Activated CD4-positive, alpha-beta memory T cell treated with anti-CD3 and anti-CD28 coated beads, Interleukin-2, amount 10 ng/mL, durations not matched to agents 7 days and 5 days (primary cell): ENCODE measurements at regions of chr3 and their contacts with region 1.

Region 1: GRCh38 chr3:152268555-152269425 is at the start of gene MBNL1:
- DNase-seq: peak; percentile 90
- H3K4me3 Mint-ChIP-seq: peak within 1 kb of the TSS; percentile 92
- H3K27ac Mint-ChIP-seq: peak within 1 kb of the TSS; percentile 95
- H3K4me1 Mint-ChIP-seq: peaks cover 56% of the 10 kb centered on the region
- H3K27me3 Mint-ChIP-seq: no peaks in the 10 kb centered on the region
- total RNA-seq, gene MBNL1: 289 to 305 TPM

Region 2: DNA sequence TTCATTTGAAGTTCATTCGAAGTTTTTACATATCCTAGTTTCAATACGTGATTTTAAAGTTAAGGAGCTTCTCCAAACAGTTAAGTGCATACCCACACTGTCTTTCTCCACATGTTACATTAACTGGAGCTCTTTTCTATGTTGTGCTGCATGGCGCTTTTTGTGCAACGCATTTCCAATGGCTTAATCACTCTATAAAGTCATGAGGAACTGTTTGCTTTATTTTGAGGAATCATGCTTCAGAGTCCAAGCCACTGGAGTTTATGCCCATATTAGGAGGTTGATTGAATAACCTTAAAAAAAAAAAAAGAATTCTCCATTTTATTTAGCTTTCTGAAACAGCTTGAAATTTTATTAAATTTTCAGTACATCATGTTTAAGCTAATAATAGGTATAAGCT is 109.5 kb before region 1 on chr3:
- CTCF ChIA-PET with region 1: no interaction called
- POLR2A ChIA-PET with region 1: no interaction called
- DNase-seq: no peak
- H3K4me3 Mint-ChIP-seq: no peak overlapping the region
- H3K27ac Mint-ChIP-seq: no peak overlapping the region
- H3K4me1 Mint-ChIP-seq: peaks cover 2% of the 10 kb centered on the region
- H3K27me3 Mint-ChIP-seq: peaks cover 4% of the 10 kb centered on the region

Region 3: DNA sequence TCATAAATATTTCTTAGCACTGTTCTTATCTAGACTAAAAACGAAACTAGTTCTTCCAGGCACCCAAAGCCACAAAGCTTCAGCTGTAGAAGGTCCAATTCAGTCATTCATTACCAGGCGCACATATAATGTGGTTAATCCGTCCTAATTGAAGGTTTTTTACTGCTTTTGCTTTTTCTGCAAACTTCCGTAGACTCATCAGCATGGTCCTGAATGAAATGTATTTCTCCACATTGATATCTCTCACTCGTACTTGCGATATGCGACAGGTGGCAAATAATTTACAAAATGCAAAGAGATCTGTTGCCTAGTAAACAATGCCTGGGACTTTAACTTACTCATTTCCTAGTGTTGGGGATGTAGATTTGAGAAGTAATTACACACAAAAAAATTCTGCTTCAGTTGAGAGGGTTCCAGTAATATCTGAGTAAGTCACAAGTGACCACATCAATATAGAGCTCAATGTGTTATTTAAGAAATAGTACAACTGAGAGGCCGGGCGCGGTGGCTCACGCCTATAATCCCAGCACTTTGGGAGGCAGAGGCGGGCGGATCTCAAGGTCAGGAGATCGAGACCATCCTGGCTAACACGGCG is 75.0 kb before region 1 on chr3:
- CTCF ChIA-PET with region 1: interaction called, 7 read pairs
- POLR2A ChIA-PET with region 1: interaction called, 232 read pairs
- DNase-seq: peak; percentile 48
- H3K4me3 Mint-ChIP-seq: peak overlapping the region; percentile 75
- H3K27ac Mint-ChIP-seq: peak overlapping the region; percentile 87
- H3K4me1 Mint-ChIP-seq: peaks cover 80% of the 10 kb centered on the region
- H3K27me3 Mint-ChIP-seq: no peaks in the 10 kb centered on the region

Region 4: DNA sequence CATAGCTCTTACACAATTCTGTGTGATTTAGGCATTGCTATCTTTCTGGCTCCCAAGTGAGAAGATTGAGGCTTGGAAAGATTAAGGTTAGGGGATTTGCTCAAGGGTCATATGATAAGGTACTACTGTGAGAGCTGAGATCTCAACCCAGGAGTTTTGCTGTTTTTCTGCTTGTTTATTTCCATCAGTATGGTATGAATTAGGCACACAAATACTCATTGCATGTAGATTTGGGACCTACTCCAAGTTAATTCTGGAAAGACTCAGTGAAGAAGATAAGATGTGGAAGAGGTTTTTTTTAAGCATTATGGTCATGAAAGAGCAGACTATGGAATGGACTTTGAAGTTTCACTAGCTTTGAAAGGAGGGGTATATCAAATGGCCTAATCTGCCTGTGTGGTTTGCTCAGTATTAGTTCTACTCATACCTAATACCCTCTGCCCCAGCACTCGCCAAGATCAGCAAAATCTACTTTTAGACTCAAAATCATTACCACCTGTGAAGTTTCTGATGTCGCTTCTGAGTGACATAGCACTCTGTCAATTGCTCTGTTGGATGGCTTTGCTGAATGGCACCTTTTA is 12.4 kb after region 1 on chr3:
- CTCF ChIA-PET with region 1: interaction called, 11 read pairs
- POLR2A ChIA-PET with region 1: interaction called, 179 read pairs
- DNase-seq: no peak
- H3K4me3 Mint-ChIP-seq: peak overlapping the region; percentile 15
- H3K27ac Mint-ChIP-seq: peak overlapping the region; percentile 68
- H3K4me1 Mint-ChIP-seq: peaks cover 79% of the 10 kb centered on the region
- H3K27me3 Mint-ChIP-seq: no peaks in the 10 kb centered on the region

Region 5: GRCh38 chr3:152309535-152310307 is 40.9 kb after region 1 on chr3:
- CTCF ChIA-PET with region 1: no interaction called
- POLR2A ChIA-PET with region 1: interaction called, 12 read pairs
- DNase-seq: no peak
- H3K4me3 Mint-ChIP-seq: no peak overlapping the region
- H3K27ac Mint-ChIP-seq: peak overlapping the region; percentile 36
- H3K4me1 Mint-ChIP-seq: peaks cover 64% of the 10 kb centered on the region
- H3K27me3 Mint-ChIP-seq: no peaks in the 10 kb centered on the region

Region 6: GRCh38 chr3:152331018-152331541 is 62.3 kb after region 1 on chr3:
- CTCF ChIA-PET with region 1: no interaction called
- POLR2A ChIA-PET with region 1: interaction called, 11 read pairs
- DNase-seq: no peak
- H3K4me3 Mint-ChIP-seq: no peak overlapping the region
- H3K27ac Mint-ChIP-seq: peak overlapping the region; percentile 25
- H3K4me1 Mint-ChIP-seq: peaks cover 80% of the 10 kb centered on the region
- H3K27me3 Mint-ChIP-seq: no peaks in the 10 kb centered on the region